ENCODE measurements at regions of chr21 and their contacts with region 1.

Region 1: GRCh38 chr21:44647222-44647552 is 973 bp downstream of the KRTAP10-11 start:
- DNase-seq: no peak
- H3K4me3 ChIP-seq: no peak overlapping the region
- H3K4me1 ChIP-seq: no peaks in the 10 kb centered on the region
- H3K27me3 ChIP-seq: no peaks in the 10 kb centered on the region

Region 2: GRCh38 chr21:44709426-44710293 is 62.5 kb after region 1 on chr21:
- in situ Hi-C with region 1: loop called (anchors 10 kb)
- DNase-seq: peak in 1 of 2 experiments; percentile 18
- H3K4me3 ChIP-seq: no peak overlapping the region
- H3K4me1 ChIP-seq: no peaks in the 10 kb centered on the region
- H3K27me3 ChIP-seq: peaks cover 78% of the 10 kb centered on the region

Region 3: GRCh38 chr21:44737706-44738354 is 90.6 kb after region 1 on chr21:
- in situ Hi-C with region 1: no loop called
- DNase-seq: no peak
- H3K4me3 ChIP-seq: no peak overlapping the region
- H3K4me1 ChIP-seq: no peaks in the 10 kb centered on the region
- H3K27me3 ChIP-seq: peaks cover 9% of the 10 kb centered on the region; the same call in 1 of the 2 replicates

Region 4: DNA sequence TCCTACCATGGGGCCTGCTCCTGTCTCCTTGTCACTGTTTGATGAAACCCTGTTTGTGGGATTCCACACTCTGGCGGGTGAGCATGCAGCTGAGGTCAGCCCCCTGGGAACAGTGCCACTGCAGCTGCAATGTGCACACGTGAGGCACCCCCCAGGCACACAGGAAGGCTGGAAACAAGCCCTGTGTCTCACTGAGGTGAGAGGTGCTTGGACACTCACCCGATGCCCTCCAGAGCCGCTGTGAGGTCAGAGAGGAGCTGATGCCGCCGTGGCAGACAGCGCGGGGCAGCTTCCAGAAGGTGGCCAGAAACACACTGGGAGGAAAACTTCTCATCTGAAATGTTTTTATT is 342.3 kb after region 1 on chr21:
- in situ Hi-C with region 1: no loop called
- DNase-seq: no peak
- H3K4me3 ChIP-seq: no peak overlapping the region
- H3K4me1 ChIP-seq: no peaks in the 10 kb centered on the region
- H3K27me3 ChIP-seq: no peaks in the 10 kb centered on the region